CD4-positive, alpha-beta memory T cell (primary cell): ENCODE measurements at regions of chr1 and their contacts with region 1.

Region 1: GRCh38 chr1:244204004-244204403 is 152.9 kb downstream of the ZBTB18 start:
- DNase-seq: no peak
- H3K4me3 ChIP-seq: no peak overlapping the region
- H3K4me3 Mint-ChIP-seq: no peak overlapping the region
- H3K27ac ChIP-seq: no peak overlapping the region
- H3K27ac Mint-ChIP-seq: no peak overlapping the region
- H3K4me1 ChIP-seq: no peaks in the 10 kb centered on the region
- H3K4me1 Mint-ChIP-seq: no peaks in the 10 kb centered on the region
- H3K27me3 ChIP-seq: no peaks in the 10 kb centered on the region
- H3K27me3 Mint-ChIP-seq: no peaks in the 10 kb centered on the region

Region 2: GRCh38 chr1:244192336-244192735 is 11.7 kb before region 1 on chr1:
- CTCF ChIA-PET with region 1: no interaction called
- POLR2A ChIA-PET with region 1: no interaction called
- intact Hi-C with region 1: no loop called
- DNase-seq: no peak
- H3K4me3 ChIP-seq: no peak overlapping the region
- H3K4me3 Mint-ChIP-seq: no peak overlapping the region
- H3K27ac ChIP-seq: no peak overlapping the region
- H3K27ac Mint-ChIP-seq: no peak overlapping the region
- H3K4me1 ChIP-seq: no peaks in the 10 kb centered on the region
- H3K4me1 Mint-ChIP-seq: peaks cover 0 to 2% (median 0%) of the 10 kb centered on the region in 4 donors
- H3K27me3 ChIP-seq: no peaks in the 10 kb centered on the region
- H3K27me3 Mint-ChIP-seq: peaks cover 3 to 12% of the 10 kb centered on the region in 2 donors

Region 3: GRCh38 chr1:244214009-244214967 is 10.3 kb after region 1 on chr1:
- CTCF ChIA-PET with region 1: interaction called, 10 read pairs
- POLR2A ChIA-PET with region 1: no interaction called
- intact Hi-C with region 1: no loop called
- DNase-seq: no peak
- H3K4me3 ChIP-seq: no peak overlapping the region
- H3K4me3 Mint-ChIP-seq: no peak overlapping the region
- H3K27ac ChIP-seq: no peak overlapping the region
- H3K27ac Mint-ChIP-seq: no peak overlapping the region
- H3K4me1 ChIP-seq: no peaks in the 10 kb centered on the region
- H3K4me1 Mint-ChIP-seq: no peaks in the 10 kb centered on the region
- H3K27me3 ChIP-seq: no peaks in the 10 kb centered on the region
- H3K27me3 Mint-ChIP-seq: peaks cover 0 to 7% of the 10 kb centered on the region in 2 donors

Region 4: GRCh38 chr1:244409701-244410100 is 205.7 kb after region 1 on chr1:
- CTCF ChIA-PET with region 1: no interaction called
- POLR2A ChIA-PET with region 1: no interaction called
- intact Hi-C with region 1: no loop called
- DNase-seq: no peak
- H3K4me3 ChIP-seq: no peak overlapping the region
- H3K4me3 Mint-ChIP-seq: no peak overlapping the region
- H3K27ac ChIP-seq: no peak overlapping the region
- H3K27ac Mint-ChIP-seq: peak overlapping the region in 1 of 7 donors; percentile 83
- H3K4me1 ChIP-seq: no peaks in the 10 kb centered on the region
- H3K4me1 Mint-ChIP-seq: peaks cover 0 to 7% (median 6%) of the 10 kb centered on the region in 4 donors
- H3K27me3 ChIP-seq: no peaks in the 10 kb centered on the region
- H3K27me3 Mint-ChIP-seq: no peaks in the 10 kb centered on the region